ENCODE measurements at regions of chr1 and their contacts with region 1.

Region 1: GRCh38 chr1:224434691-224435317 is at the start of gene WDR26:
- DNase-seq: peak; percentile 96
- H3K4me3 Mint-ChIP-seq: peak within 1 kb of the TSS; percentile 80
- H3K27ac Mint-ChIP-seq: peak within 1 kb of the TSS; percentile 69
- H3K4me1 Mint-ChIP-seq: peaks cover 44% of the 10 kb centered on the region
- H3K27me3 Mint-ChIP-seq: no peaks in the 10 kb centered on the region
- CTCF ChIP-seq: peak; percentile 18
- total RNA-seq, gene WDR26: 149 and 156 TPM in 2 replicates

Region 2: DNA sequence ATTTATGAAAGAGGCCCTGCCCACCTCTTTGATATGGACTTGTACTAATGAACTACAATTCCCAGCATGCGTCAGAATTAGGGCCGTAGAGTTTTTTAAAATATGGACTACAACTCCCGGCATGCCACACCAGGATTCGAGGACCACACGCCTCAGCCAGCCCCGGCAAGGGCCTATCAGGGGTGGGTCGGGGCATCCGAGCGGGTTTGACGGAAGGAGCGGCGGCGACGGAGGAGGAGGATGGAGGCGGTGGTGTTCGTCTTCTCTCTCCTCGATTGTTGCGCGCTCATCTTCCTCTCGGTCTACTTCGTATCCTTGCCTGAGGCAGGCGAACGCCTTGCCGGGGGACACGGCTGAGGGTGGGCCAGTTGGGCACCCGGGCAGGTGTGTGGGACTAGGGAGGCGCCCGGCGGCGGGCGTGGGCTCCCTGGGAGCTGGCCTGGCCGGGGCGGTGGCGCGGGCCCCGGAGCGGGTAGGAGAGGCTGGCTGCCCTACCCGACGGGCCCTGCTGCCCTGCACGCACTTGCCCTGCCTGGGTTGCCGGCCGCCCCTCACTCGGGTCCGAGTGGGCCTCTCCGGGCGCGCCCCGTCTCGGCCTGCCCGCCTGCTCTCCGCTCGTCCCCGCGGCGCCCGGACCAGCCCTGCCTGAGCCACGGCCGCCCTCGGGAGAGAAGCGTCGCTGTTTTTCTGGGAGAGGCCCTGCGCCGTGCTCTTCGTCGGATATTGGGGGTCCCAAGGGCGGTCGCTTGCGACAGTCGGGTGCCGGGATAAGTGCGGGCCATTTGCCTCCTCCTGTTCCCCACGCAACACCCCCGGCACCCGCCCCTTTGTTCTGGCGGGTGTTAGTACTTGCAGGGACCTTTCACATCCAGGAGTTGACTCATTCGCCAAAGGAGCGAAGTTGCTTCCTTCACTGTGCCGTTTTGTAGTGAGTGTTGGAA is 77.8 kb before region 1 on chr1 and contains the start of gene CNIH4:
- CTCF ChIA-PET with region 1: no interaction called
- POLR2A ChIA-PET with region 1: interaction called, 70 read pairs
- intact Hi-C with region 1: no loop called
- DNase-seq: peak; percentile 99
- H3K4me3 Mint-ChIP-seq: peak within 1 kb of the TSS; percentile 89
- H3K27ac Mint-ChIP-seq: peak within 1 kb of the TSS; percentile 74
- H3K4me1 Mint-ChIP-seq: peaks cover 17% of the 10 kb centered on the region
- H3K27me3 Mint-ChIP-seq: no peaks in the 10 kb centered on the region
- CTCF ChIP-seq: peak; percentile 11
- total RNA-seq, gene CNIH4: 190 and 212 TPM in 2 replicates

Region 3: DNA sequence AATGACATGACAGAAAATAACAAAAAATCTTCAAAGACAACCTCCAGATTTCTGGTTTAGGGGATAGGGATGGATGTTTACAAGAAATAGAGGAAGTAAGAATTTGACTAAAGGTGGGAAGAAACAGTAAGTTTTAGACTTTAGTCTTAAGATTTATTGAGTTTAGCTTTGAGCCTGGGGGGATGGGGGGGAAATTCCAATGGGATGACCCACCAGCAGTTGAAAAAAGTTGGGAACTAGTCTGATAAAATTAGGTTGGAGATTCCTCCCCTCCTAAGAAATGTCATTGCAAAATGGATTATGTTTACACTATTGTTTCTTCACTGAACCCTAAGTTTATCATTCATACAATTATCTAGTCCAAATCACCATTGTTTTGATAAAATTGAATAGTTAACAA is 28.6 kb before region 1 on chr1:
- CTCF ChIA-PET with region 1: interaction called, 3 read pairs
- POLR2A ChIA-PET with region 1: interaction called, 84 read pairs
- intact Hi-C with region 1: no loop called
- DNase-seq: no peak
- H3K4me3 Mint-ChIP-seq: no peak overlapping the region
- H3K27ac Mint-ChIP-seq: peak overlapping the region; percentile 32
- H3K4me1 Mint-ChIP-seq: peaks cover 25% of the 10 kb centered on the region
- H3K27me3 Mint-ChIP-seq: no peaks in the 10 kb centered on the region
- CTCF ChIP-seq: no peak

Region 4: DNA sequence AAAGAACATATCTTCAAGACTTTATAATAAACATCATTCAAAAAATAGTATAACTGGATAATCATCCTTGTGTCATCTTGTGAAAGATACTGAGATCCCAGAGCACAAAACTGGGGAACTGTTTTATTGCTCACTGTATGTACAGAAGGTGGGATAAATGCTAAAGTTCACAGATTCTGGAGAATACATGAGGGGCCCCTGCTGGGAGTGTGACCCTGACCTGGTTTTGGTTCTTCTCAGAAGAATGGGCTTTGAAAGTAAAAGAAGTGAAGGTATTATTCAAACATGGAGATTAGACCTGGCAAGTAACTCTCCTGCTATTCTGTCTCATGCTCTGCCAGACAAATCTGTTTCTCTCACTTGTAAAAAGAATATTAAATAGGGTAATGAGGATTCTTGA is 14.7 kb before region 1 on chr1:
- CTCF ChIA-PET with region 1: interaction called, 8 read pairs
- POLR2A ChIA-PET with region 1: interaction called, 34 read pairs
- intact Hi-C with region 1: no loop called
- DNase-seq: no peak
- H3K4me3 Mint-ChIP-seq: no peak overlapping the region
- H3K27ac Mint-ChIP-seq: no peak overlapping the region
- H3K4me1 Mint-ChIP-seq: peaks cover 11% of the 10 kb centered on the region
- H3K27me3 Mint-ChIP-seq: no peaks in the 10 kb centered on the region
- CTCF ChIP-seq: no peak

Region 5: GRCh38 chr1:224482619-224483018 is 47.8 kb after region 1 on chr1:
- CTCF ChIA-PET with region 1: interaction called, 10 read pairs
- POLR2A ChIA-PET with region 1: interaction called, 14 read pairs
- intact Hi-C with region 1: no loop called
- DNase-seq: peak; percentile 85
- H3K4me3 Mint-ChIP-seq: no peak overlapping the region
- H3K27ac Mint-ChIP-seq: peak overlapping the region; percentile 61
- H3K4me1 Mint-ChIP-seq: peaks cover 34% of the 10 kb centered on the region
- H3K27me3 Mint-ChIP-seq: no peaks in the 10 kb centered on the region
- CTCF ChIP-seq: no peak

Region 6: DNA sequence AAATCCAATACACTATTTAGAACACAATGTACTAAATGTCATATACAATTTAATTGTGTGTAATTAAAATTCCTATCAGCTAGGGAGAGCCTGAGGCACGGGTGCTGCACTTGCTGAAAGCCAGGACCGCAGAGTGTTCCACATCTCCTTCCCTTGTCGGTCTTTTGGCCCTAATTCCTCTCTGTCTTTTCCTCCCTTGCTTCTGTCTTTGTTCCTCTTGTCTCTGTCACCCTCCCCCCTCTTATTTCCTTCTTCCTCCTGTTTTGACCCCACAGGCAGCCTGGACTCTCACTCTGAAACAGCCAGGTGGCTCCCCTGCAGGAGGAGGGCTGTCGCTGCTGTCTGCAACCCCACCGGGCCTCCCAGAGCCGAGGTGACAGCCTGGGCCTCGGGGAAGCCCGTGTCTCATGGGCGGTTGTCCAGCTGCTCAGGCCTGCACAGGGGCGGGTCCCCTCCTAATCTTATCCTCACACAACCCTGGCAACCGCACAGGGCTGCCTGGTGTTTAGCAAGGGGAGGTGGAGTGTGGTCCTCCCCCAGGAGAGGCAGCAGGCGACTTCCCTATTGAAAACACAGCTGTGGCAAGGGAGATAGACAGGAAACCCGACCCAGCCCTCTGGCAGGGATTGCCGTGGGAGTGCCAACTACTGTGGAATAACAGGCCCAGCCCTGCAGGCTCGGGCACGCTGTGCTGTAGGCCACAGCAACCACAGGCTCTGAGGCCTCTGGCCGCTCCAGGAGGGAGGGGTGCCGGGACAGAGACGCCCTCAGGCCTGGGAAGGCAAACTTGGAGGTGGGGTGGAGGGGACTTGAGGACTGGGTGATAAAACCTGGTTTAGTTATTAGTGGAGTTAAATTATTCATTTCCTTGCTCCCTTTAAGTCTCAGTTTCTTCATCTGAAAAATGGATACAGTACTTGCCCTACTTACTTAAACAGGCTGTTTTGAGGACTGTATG is 68.6 kb after region 1 on chr1:
- CTCF ChIA-PET with region 1: interaction called, 16 read pairs
- POLR2A ChIA-PET with region 1: interaction called, 294 read pairs
- intact Hi-C with region 1: loop called (anchors 2 kb)
- DNase-seq: peak; percentile 100
- H3K4me3 Mint-ChIP-seq: peak overlapping the region; percentile 48
- H3K27ac Mint-ChIP-seq: peak overlapping the region; percentile 92
- H3K4me1 Mint-ChIP-seq: peaks cover 72% of the 10 kb centered on the region
- H3K27me3 Mint-ChIP-seq: no peaks in the 10 kb centered on the region
- CTCF ChIP-seq: peak; percentile 10